Caco-2 (cell line): ENCODE measurements at regions of chr11 and their contacts with region 1.

Region 1: DNA sequence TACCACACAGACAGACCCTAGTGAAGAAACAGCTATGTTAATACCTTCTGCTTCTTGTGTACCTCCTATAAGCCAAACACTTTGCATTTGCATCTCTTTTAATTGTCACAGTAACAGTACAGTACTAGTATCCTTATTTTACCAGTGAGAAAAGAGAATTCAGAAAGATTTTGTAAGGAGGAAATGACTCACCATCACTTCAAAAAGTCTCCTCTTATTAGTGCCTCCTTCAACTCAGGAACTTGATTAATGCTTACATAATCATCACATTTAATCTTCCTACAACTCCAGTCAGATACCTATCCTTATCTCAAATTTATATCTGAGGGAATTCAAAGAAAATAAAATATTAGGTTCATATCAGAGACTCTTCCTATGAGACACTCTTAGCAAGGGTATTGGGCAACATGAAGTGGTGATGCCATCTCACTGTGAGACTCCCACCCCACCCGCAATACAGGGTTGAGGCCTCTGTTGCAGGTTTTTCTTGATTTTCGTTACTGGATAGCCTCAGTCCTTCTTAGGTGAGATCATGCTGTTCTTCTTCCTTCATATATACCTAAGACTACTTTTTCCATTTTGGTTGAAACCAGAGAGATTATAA is 26.1 kb upstream of the CTSC start:
- DNase-seq: no peak
- H3K4me3 ChIP-seq: no peak overlapping the region
- H3K4me3 Mint-ChIP-seq: no peak overlapping the region
- H3K27ac Mint-ChIP-seq: no peak overlapping the region
- H3K4me1 ChIP-seq: no peaks in the 10 kb centered on the region
- H3K4me1 Mint-ChIP-seq: peaks cover 6% of the 10 kb centered on the region
- H3K27me3 ChIP-seq: no peaks in the 10 kb centered on the region
- H3K27me3 Mint-ChIP-seq: no peaks in the 10 kb centered on the region
- CTCF ChIP-seq: no peak

Region 2: GRCh38 chr11:88375927-88376470 is 12.3 kb after region 1 on chr11:
- CTCF ChIA-PET with region 1: no interaction called
- POLR2A ChIA-PET with region 1: no interaction called
- intact Hi-C with region 1: loop called (anchors 1 kb)
- DNase-seq: no peak
- H3K4me3 ChIP-seq: no peak overlapping the region
- H3K4me3 Mint-ChIP-seq: no peak overlapping the region
- H3K27ac Mint-ChIP-seq: no peak overlapping the region
- H3K4me1 ChIP-seq: no peaks in the 10 kb centered on the region
- H3K4me1 Mint-ChIP-seq: peaks cover 6% of the 10 kb centered on the region
- H3K27me3 ChIP-seq: no peaks in the 10 kb centered on the region
- H3K27me3 Mint-ChIP-seq: no peaks in the 10 kb centered on the region
- CTCF ChIP-seq: no peak

Region 3: GRCh38 chr11:88439356-88439755 is 75.7 kb after region 1 on chr11:
- CTCF ChIA-PET with region 1: no interaction called
- POLR2A ChIA-PET with region 1: no interaction called
- intact Hi-C with region 1: no loop called
- DNase-seq: no peak
- H3K4me3 ChIP-seq: no peak overlapping the region
- H3K4me3 Mint-ChIP-seq: no peak overlapping the region
- H3K27ac Mint-ChIP-seq: no peak overlapping the region
- H3K4me1 ChIP-seq: no peaks in the 10 kb centered on the region
- H3K4me1 Mint-ChIP-seq: no peaks in the 10 kb centered on the region
- H3K27me3 ChIP-seq: no peaks in the 10 kb centered on the region
- H3K27me3 Mint-ChIP-seq: no peaks in the 10 kb centered on the region
- CTCF ChIP-seq: no peak

Region 4: DNA sequence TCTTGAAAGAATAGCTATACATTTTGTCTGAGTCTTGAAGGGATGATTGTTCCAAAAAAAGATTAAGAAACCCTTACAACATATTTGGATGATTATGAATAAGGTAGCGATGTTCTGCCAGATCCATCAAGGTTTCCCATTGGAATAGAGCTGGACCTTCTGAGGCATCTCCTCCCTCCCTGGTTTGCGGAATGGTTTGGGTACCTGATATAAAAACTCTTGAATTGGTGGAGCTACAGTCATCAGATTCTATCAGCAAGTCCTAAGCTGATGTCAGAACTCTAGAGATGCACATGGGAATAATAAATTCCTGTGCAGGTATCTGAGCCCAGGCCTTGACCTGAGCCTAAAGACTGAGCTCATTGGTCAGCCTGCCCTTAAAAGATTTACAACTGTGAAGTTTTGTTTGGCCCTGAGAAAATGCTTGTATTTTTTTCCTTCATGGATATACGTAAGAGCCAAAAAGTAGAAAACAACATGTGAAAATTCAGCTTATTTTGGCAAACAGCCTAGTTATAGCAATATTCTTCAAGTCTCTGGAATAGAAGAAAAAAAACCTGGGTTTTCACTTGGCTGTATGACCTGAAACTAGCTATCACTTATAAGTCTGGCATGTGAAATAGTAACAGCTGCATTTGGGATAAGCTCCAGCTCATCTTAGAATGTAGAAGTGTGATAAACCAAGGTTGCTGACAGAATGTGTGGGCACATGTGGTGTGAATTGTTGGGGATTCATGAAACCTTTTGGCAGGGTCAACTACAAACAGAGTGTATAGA is 239.6 kb after region 1 on chr11:
- CTCF ChIA-PET with region 1: no interaction called
- POLR2A ChIA-PET with region 1: interaction called, 15 read pairs
- intact Hi-C with region 1: no loop called
- DNase-seq: no peak
- H3K4me3 ChIP-seq: no peak overlapping the region
- H3K4me3 Mint-ChIP-seq: no peak overlapping the region
- H3K27ac Mint-ChIP-seq: no peak overlapping the region
- H3K4me1 ChIP-seq: no peaks in the 10 kb centered on the region
- H3K4me1 Mint-ChIP-seq: no peaks in the 10 kb centered on the region
- H3K27me3 ChIP-seq: no peaks in the 10 kb centered on the region
- H3K27me3 Mint-ChIP-seq: peaks cover 14% of the 10 kb centered on the region
- CTCF ChIP-seq: no peak